Transverse colon (tissue), 4 donors: ENCODE measurements at regions of chr6 and their contacts with region 1.

Region 1: DNA sequence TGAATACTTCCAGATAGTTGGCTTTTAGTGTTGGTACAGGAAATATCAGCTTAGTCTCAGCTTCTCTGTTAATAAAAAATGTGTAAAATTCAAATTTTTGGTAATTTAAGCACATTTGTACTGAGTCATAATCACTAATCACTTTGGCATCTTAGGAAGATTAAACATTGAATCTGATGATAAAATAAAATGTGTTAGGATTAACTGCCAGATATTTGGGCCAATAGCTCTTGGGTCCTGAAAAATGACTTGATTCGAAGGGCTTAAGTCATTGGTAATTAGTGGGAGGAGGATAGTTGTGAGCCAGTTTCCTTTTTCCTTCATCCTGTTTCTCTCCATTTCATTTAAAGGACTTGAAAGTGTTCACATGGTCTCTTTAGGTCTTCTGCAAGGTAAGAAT is 426.1 kb downstream of the RFPL4B start:
- DNase-seq: no peak
- H3K4me3 ChIP-seq: no peak overlapping the region
- H3K27ac ChIP-seq: no peak overlapping the region
- H3K4me1 ChIP-seq: no peaks in the 10 kb centered on the region
- H3K27me3 ChIP-seq: no peaks in the 10 kb centered on the region
- CTCF ChIP-seq: no peak
- EP300 ChIP-seq: no peak
- POLR2A ChIP-seq: no peak

Region 2: DNA sequence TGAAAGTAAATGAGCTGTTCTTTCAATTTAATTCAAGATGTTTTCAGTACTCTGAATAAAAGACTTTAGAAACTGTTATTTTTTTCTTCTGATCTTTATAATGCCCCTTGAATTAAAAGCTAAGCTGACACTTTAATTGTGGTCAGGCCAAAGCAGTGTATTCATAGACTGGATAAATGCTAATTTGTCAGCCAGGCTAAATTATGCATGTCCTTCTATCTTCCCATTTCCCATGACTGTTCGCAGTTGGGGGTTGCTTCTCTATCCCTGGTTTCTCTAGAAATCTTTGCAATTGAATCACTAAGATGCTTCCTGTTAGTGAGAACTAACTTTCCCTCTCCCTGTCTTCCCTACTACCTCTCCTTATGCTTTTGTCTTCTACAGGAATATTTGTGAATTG is 29.9 kb before region 1 on chr6:
- in situ Hi-C with region 1: no loop called
- intact Hi-C with region 1: no loop called
- DNase-seq: no peak
- H3K4me3 ChIP-seq: no peak overlapping the region
- H3K27ac ChIP-seq: no peak overlapping the region
- H3K4me1 ChIP-seq: no peaks in the 10 kb centered on the region
- H3K27me3 ChIP-seq: no peaks in the 10 kb centered on the region
- CTCF ChIP-seq: no peak
- EP300 ChIP-seq: no peak
- POLR2A ChIP-seq: no peak

Region 3: GRCh38 chr6:113909234-113909856 is 1136.2 kb after region 1 on chr6:
- in situ Hi-C with region 1: loop called in 3 of 4 experiments (anchors 10 kb)
- intact Hi-C with region 1: no loop called
- DNase-seq: no peak
- H3K4me3 ChIP-seq: no peak overlapping the region
- H3K27ac ChIP-seq: no peak overlapping the region
- H3K4me1 ChIP-seq: peaks cover 0 to 4% (median under 1%) of the 10 kb centered on the region in 4 donors
- H3K27me3 ChIP-seq: no peaks in the 10 kb centered on the region
- CTCF ChIP-seq: peak; percentile 70 to 81 (median 74)
- EP300 ChIP-seq: no peak
- POLR2A ChIP-seq: no peak